GM18951 (cell line): ENCODE measurements at regions of chr7 and their contacts with region 1.

Region 1: GRCh38 chr7:25894902-25895791 is 256.9 kb upstream of the NFE2L3 start:
- POLR2A ChIP-seq: peak; percentile 11

Region 2: GRCh38 chr7:26065652-26066051 is 170.5 kb after region 1 on chr7:
- in situ Hi-C with region 1: loop called (anchors 5 kb)
- POLR2A ChIP-seq: no peak

Region 3: DNA sequence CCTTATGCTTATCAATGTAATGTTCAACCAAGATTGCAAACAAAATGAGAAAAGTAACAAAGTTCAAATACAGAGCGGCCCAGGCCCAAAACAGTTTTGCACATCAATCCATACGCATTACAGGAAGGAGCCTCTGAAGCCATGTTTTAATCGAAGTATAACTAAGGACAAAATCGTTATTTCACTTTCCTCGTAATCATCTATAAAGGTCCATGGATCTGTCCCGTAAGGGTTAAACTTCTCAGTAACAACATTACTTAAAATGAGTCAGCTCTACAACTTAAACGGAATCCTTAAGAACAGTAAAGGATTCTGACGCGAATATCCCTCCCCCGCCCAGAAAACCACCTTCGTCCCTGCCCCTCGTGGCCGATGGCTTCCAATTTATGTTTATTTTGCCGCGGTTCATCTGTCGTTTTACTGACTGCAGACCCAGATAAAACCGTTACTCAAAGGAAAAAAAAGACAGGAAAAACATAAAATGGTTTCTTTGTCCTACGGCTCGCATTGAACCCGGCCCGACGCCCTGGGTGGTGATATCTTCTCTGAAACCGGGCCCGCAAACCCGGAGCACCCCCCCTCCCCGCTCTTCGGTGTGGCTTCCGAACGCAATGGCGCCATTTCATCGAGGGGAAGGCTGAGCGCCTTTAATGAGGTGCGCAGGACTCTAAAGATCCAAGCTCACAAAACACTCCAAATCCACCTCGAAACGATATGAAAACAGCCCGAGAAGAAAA is 304.3 kb after region 1 on chr7:
- in situ Hi-C with region 1: loop called (anchors 10 kb)
- POLR2A ChIP-seq: no peak

Region 4: DNA sequence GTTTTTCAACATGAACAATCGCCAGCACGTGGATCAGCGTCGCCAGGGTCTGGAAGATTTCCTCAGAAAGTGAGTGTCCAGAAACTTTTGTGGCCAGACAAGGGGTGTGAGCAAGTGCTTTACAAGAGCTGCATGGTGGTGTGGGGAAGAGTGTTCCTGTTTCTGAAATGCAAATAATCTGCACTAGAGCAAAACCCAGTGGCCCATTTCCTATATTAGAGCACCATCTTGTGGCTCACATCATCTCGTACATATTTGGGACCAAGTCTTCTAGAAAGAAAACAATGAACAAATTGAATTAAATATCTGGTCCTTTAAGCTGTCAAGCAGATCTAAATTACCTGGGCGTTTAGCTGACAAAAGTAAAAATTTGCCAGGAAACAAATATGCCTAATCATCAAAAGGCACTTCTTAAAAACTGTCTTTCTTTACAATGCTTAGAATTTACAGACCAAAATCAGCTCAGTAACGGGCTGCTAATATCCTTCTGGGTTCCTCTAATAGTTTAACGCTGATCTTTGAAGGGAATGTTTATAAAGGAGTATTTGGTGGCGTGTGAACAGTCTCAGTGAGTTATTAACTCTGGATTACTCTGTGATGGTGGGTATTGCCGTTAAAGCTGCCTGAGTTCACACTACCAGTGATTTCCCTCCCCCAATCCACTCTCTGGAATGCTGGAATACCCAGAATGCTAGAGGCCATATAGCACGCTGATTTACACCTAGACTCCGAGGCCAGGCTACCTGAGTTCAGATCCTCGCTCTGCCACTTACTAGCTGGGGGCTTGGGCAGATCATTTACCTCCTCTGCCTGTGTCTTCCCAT is 470.1 kb after region 1 on chr7:
- in situ Hi-C with region 1: loop called (anchors 10 kb)
- POLR2A ChIP-seq: no peak

Region 5: GRCh38 chr7:26490650-26491624 is 595.8 kb after region 1 on chr7:
- in situ Hi-C with region 1: loop called (anchors 25 kb)
- POLR2A ChIP-seq: no peak

Region 6: DNA sequence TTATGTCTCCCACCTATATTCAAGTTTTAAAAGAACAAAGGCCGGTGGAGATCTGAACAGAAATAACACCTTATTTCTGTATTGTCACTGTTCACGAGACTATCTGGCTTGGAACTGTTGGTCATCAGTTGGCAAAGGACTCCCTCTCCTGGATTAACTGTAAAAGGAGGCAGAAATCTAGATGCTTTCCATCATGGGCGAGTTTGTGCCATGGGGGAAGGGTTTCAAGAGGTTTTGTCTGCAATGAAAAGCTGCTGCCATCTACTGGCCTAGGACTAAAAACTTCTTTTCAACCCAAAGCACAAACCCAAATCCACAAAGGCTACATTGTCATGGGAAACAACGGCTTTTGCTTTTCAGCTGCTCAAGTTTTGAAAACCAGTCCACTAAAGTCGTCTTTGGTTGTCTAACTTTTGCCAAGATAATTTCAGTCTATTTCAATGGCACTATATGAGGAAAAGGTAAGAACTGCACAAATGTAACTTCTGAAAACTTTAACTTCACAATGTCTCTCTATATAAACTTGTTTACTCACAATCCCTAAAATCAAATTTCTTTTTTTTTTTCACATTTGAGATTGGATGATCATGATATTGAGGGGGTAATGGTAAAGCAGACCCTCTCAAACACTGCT is 772.5 kb after region 1 on chr7:
- in situ Hi-C with region 1: loop called (anchors 25 kb)
- POLR2A ChIP-seq: no peak